CD4-positive, alpha-beta memory T cell (primary cell): ENCODE measurements at regions of chr4 and their contacts with region 1.

Region 1: GRCh38 chr4:2977211-2978088 is 14.1 kb downstream of the GRK4 start:
- DNase-seq: no peak
- H3K4me3 ChIP-seq: no peak overlapping the region
- H3K4me3 Mint-ChIP-seq: no peak overlapping the region
- H3K27ac ChIP-seq: no peak overlapping the region
- H3K27ac Mint-ChIP-seq: no peak overlapping the region
- H3K4me1 ChIP-seq: no peaks in the 10 kb centered on the region
- H3K4me1 Mint-ChIP-seq: peaks cover 0 to 4% (median 2%) of the 10 kb centered on the region in 4 donors
- H3K27me3 ChIP-seq: no peaks in the 10 kb centered on the region
- H3K27me3 Mint-ChIP-seq: peaks cover 0 to 2% of the 10 kb centered on the region in 2 donors

Region 2: DNA sequence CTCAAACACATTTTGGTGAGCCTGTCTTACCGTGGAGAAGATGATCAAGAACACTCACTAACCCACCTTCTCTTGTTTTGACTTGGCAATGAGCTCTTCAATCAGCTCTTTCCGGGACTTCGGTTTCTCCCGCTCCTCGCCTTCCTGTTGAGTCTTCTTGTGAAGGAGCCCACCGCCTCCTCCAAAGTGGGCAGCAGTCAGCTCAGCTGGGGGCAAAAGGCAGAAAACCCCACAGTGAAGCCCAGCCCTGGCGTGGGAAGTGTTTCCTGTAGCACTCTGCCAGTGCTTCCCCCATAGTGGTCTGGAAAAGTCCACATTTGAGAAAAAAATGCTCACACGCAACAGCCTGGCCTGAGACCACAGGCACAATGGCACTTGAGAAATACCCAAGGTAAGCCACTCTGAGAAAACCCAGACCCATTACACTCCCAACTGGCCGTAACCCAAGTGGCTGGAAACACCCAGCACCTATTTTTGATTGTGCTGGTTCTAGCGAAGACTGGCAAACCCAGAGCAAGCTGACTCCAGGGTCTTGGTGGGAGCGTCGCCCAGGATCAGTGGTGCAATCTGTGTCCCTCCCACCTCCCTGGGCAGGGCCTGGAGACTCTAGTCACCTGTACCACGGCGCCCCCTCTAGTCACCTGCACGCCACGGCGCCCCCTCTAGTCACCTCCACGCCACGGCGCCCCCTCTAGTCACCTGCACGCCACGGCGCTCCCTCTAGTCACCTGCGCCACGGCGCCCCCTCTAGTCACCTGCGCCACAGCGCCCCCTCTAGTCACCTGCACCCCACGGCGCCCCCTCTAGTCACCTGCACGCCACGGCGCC is 22.9 kb before region 1 on chr4:
- CTCF ChIA-PET with region 1: interaction called, 10 read pairs
- POLR2A ChIA-PET with region 1: no interaction called
- intact Hi-C with region 1: no loop called
- DNase-seq: peak; percentile 40 to 70 (median 44)
- H3K4me3 ChIP-seq: no peak overlapping the region
- H3K4me3 Mint-ChIP-seq: peak overlapping the region in 4 of 8 donors; percentile 20 to 83 (median 50)
- H3K27ac ChIP-seq: peak overlapping the region; percentile 23
- H3K27ac Mint-ChIP-seq: peak overlapping the region; percentile 83 to 98 (median 92)
- H3K4me1 ChIP-seq: peaks cover 33% of the 10 kb centered on the region
- H3K4me1 Mint-ChIP-seq: peaks cover 25 to 42% (median 34%) of the 10 kb centered on the region in 4 donors
- H3K27me3 ChIP-seq: no peaks in the 10 kb centered on the region
- H3K27me3 Mint-ChIP-seq: no peaks in the 10 kb centered on the region

Region 3: GRCh38 chr4:2991243-2991642 is 13.8 kb after region 1 on chr4:
- CTCF ChIA-PET with region 1: interaction called, 23 read pairs
- POLR2A ChIA-PET with region 1: no interaction called
- intact Hi-C with region 1: no loop called
- DNase-seq: no peak
- H3K4me3 ChIP-seq: no peak overlapping the region
- H3K4me3 Mint-ChIP-seq: no peak overlapping the region
- H3K27ac ChIP-seq: no peak overlapping the region
- H3K27ac Mint-ChIP-seq: no peak overlapping the region
- H3K4me1 ChIP-seq: no peaks in the 10 kb centered on the region
- H3K4me1 Mint-ChIP-seq: no peaks in the 10 kb centered on the region
- H3K27me3 ChIP-seq: no peaks in the 10 kb centered on the region
- H3K27me3 Mint-ChIP-seq: peaks cover 2 to 7% of the 10 kb centered on the region in 2 donors

Region 4: GRCh38 chr4:3037957-3038461 is 60.6 kb after region 1 on chr4:
- CTCF ChIA-PET with region 1: interaction called, 11 read pairs
- POLR2A ChIA-PET with region 1: interaction called, 3 read pairs
- intact Hi-C with region 1: loop called (anchors 1 kb)
- DNase-seq: no peak
- H3K4me3 ChIP-seq: peak overlapping the region in 1 of 2 donors; percentile 10
- H3K4me3 Mint-ChIP-seq: peak overlapping the region; percentile 63 to 86 (median 72)
- H3K27ac ChIP-seq: no peak overlapping the region
- H3K27ac Mint-ChIP-seq: peak overlapping the region in 5 of 7 donors; percentile 5 to 74 (median 47)
- H3K4me1 ChIP-seq: peaks cover 34% of the 10 kb centered on the region
- H3K4me1 Mint-ChIP-seq: peaks cover 15 to 44% (median 31%) of the 10 kb centered on the region in 4 donors
- H3K27me3 ChIP-seq: no peaks in the 10 kb centered on the region
- H3K27me3 Mint-ChIP-seq: peaks cover 1 to 4% of the 10 kb centered on the region in 2 donors